Activated T-helper 1 cell treated with anti-CD3 and anti-CD28 coated beads, Interleukin-12 subunit alpha, Interleukin-12 subunit beta, Interleukin-2, Interleukin-4 antibody, amounts not matched to agents 30 ng/mL and 10 ng/mL and 1 ng/mL, durations not matched to agents 14 hours and 24 hours and 36 hours (primary cell): ENCODE measurements at regions of chr17 and their contacts with region 1.

Region 1: DNA sequence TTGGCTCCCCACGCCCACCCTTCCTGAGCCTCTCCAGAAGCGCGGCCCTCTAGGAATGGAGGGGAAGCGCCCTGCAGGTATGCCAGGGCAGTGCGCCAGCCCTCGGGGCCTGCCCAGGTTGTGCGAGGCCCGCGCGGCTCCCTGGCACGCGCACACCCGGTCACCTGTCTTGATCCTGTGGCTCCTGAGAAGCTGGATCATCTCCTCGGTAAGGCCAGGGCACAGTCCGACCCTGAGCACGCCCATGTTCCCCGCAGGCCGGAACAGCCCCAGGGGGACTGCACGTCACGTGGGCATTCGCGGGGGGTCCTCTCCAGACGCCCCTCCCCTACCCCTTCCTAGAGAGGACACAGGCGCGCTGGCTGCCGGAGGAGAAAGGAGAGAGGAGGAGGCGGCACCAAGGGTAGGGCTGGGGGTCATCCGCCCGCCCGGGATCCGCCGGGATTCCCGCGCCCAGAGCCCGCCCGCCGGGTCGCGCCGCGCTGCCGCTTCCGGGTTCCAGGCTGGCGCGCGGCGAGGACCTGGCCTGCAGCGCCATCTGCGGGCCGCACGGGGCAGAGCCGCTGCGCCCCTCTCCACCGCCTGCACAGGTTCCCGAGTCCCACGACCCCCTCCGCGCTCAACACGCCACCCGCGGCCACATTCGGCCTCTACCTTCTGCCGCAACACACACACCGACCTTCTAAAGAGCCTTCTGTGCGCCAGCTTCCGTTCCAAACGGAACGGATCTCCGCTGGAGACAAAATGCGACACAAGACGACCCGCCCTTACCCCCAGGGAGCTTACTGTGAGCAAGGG is at the start of gene RAD51D:
- DNase-seq: peak; percentile 73
- H3K4me3 Mint-ChIP-seq: peak within 1 kb of the TSS; percentile 96
- H3K27ac Mint-ChIP-seq: peak within 1 kb of the TSS; percentile 95
- H3K4me1 Mint-ChIP-seq: peaks cover 31% of the 10 kb centered on the region
- H3K27me3 Mint-ChIP-seq: no peaks in the 10 kb centered on the region
- total RNA-seq, gene RAD51D: 29.8 and 34.9 TPM in 2 replicates

Region 2: GRCh38 chr17:34420254-34420766 is 699.3 kb before region 1 on chr17:
- intact Hi-C with region 1: loop called (anchors 1 kb)
- DNase-seq: peak; percentile 30
- H3K4me3 Mint-ChIP-seq: no peak overlapping the region
- H3K27ac Mint-ChIP-seq: no peak overlapping the region
- H3K4me1 Mint-ChIP-seq: no peaks in the 10 kb centered on the region
- H3K27me3 Mint-ChIP-seq: peaks cover 51% of the 10 kb centered on the region

Region 3: DNA sequence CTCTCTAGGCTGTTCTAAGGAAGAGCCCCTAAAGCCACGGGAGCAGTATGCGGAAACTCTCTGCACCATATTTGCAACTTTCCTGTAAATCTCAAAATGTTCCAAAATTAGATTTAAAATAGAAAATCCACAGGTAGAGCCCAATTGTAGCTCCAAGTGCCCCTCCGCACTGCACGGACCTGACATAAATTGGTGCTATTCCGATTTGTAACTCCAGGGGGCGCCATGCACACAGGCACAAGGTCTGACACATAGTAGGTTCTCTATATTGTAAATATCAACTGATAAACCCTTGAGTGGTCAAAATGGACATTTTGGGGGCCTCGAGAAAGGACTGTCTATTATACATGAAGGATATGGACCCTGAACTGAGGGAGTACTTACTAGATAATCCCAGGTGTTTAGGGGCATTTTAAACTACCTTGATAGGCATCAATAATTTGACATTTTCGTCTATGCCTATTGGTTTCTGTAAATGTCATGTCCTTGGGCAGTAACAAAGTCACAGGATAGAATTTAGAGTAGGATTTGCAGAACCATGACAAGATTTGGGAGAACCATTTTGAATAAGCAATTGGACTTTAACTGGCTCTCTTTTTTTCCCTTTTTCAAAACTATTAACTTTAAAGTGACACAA is 576.7 kb before region 1 on chr17:
- intact Hi-C with region 1: loop called (anchors 1 kb)
- DNase-seq: peak; percentile 17
- H3K4me3 Mint-ChIP-seq: no peak overlapping the region
- H3K27ac Mint-ChIP-seq: no peak overlapping the region
- H3K4me1 Mint-ChIP-seq: no peaks in the 10 kb centered on the region
- H3K27me3 Mint-ChIP-seq: peaks cover 21% of the 10 kb centered on the region

Region 4: DNA sequence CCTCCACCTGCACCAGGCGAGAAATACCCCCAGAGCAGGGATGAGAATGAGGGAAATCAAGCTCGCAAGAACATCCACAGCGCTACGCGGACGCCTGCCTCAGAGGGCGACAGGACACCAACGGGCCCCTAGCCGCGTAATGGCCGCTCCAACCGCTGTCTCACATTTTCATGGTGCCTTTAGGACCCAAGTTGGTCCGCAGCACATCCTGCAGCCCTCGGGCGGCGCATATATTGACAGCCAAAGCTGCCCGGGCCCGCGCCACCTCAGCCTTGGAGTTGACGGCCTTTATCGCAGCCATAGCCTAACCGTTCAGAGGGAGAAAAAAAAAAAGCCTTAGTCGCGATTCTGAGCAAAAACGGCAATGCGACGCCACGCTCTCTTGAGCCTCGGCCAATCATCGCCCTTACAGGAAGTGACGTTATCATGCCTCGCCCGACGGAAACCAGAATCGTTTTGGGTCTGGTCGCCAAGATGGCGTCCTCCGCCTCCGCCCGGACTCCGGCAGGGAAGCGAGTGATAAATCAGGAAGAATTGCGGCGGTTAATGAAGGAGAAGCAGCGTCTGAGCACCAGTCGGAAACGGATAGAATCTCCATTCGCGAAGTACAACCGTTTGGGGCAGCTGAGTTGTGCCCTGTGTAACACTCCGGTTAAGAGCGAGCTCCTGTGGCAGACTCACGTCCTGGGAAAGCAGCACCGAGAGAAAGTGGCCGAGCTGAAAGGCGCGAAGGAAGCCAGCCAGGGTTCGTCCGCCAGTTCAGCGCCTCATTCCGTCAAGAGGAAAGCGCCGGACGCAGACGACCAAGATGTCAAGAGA is 158.3 kb before region 1 on chr17 and contains the starts of genes CCT6B and ZNF830:
- intact Hi-C with region 1: loop called (anchors 1 kb)
- DNase-seq: peak; percentile 88
- H3K4me3 Mint-ChIP-seq: peak within 1 kb of the TSS; percentile 100
- H3K27ac Mint-ChIP-seq: peak within 1 kb of the TSS; percentile 100
- H3K4me1 Mint-ChIP-seq: peaks cover 23% of the 10 kb centered on the region
- H3K27me3 Mint-ChIP-seq: no peaks in the 10 kb centered on the region
- total RNA-seq, gene CCT6B: 0.96 and 1.0 TPM in 2 replicates
- total RNA-seq, gene ZNF830: 28.0 and 29.7 TPM in 2 replicates

Region 5: GRCh38 chr17:34998205-34998604 is 121.4 kb before region 1 on chr17:
- intact Hi-C with region 1: loop called (anchors 1 kb)
- DNase-seq: peak; percentile 77
- H3K4me3 Mint-ChIP-seq: no peak overlapping the region
- H3K27ac Mint-ChIP-seq: peak overlapping the region; percentile 11
- H3K4me1 Mint-ChIP-seq: peaks cover 21% of the 10 kb centered on the region
- H3K27me3 Mint-ChIP-seq: no peaks in the 10 kb centered on the region

Region 6: GRCh38 chr17:35022536-35023063 is 97.0 kb before region 1 on chr17:
- intact Hi-C with region 1: loop called (anchors 1 kb)
- DNase-seq: peak; percentile 67
- H3K4me3 Mint-ChIP-seq: peak overlapping the region; percentile 79
- H3K27ac Mint-ChIP-seq: peak overlapping the region; percentile 99
- H3K4me1 Mint-ChIP-seq: peaks cover 70% of the 10 kb centered on the region
- H3K27me3 Mint-ChIP-seq: no peaks in the 10 kb centered on the region

Region 7: GRCh38 chr17:35046740-35047283 is 72.8 kb before region 1 on chr17:
- intact Hi-C with region 1: loop called (anchors 1 kb)
- DNase-seq: peak; percentile 65
- H3K4me3 Mint-ChIP-seq: peak overlapping the region; percentile 66
- H3K27ac Mint-ChIP-seq: peak overlapping the region; percentile 97
- H3K4me1 Mint-ChIP-seq: peaks cover 49% of the 10 kb centered on the region
- H3K27me3 Mint-ChIP-seq: no peaks in the 10 kb centered on the region